GM12878 (cell line): ENCODE measurements at regions of chr1 and their contacts with region 1.

Region 1: GRCh38 chr1:45583264-45583665 is 576 bp upstream of the NASP start:
- DNase-seq: peak; percentile 98
- ATAC-seq: peak; percentile 89
- H3K4me3 ChIP-seq: peak overlapping the region; percentile 94
- H3K27ac ChIP-seq: peak overlapping the region; percentile 97
- H3K4me1 ChIP-seq: peaks cover 12% of the 10 kb centered on the region; the same call in 1 of the 2 replicates
- H3K27me3 ChIP-seq: no peaks in the 10 kb centered on the region
- CTCF ChIP-seq: no peak
- EP300 ChIP-seq: no peak
- POLR2A ChIP-seq: no peak
- RAD21 ChIP-seq: no peak

Region 2: DNA sequence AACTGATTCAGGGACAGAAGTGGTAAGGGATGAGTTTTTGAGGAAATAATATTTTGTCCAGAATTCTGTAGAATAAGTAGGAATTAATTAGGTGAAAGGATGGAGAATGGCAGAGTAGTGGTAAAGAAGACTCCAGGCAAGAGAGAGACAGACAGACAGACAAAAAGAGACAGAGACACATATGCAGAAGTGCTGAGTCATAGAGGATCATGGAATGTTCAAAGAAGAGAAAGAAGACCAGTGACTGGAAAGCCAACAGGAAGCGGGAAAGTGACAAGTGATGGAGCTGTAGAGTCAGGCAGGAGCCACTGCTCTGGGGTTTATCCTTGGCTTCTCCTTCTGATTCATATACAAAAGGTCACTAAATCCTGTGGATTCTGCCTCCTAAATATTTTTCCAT is 485.3 kb before region 1 on chr1:
- CTCF ChIA-PET with region 1: no interaction called
- POLR2A ChIA-PET with region 1: no interaction called
- RAD21 ChIA-PET with region 1: no interaction called
- SMC1A ChIA-PET with region 1: no interaction called
- in situ Hi-C with region 1: no loop called
- intact Hi-C with region 1: no loop called
- DNase-seq: no peak
- ATAC-seq: no peak
- H3K4me3 ChIP-seq: no peak overlapping the region
- H3K27ac ChIP-seq: no peak overlapping the region
- H3K4me1 ChIP-seq: no peaks in the 10 kb centered on the region
- H3K27me3 ChIP-seq: no peaks in the 10 kb centered on the region
- CTCF ChIP-seq: no peak
- EP300 ChIP-seq: no peak
- POLR2A ChIP-seq: no peak
- RAD21 ChIP-seq: no peak

Region 3: GRCh38 chr1:45543581-45544417 is 39.5 kb before region 1 on chr1:
- CTCF ChIA-PET with region 1: interaction called, 3 read pairs
- POLR2A ChIA-PET with region 1: interaction called, 20 read pairs
- RAD21 ChIA-PET with region 1: interaction called, 8 read pairs
- SMC1A ChIA-PET with region 1: interaction called, 17 read pairs
- in situ Hi-C with region 1: no loop called
- intact Hi-C with region 1: no loop called
- DNase-seq: peak; percentile 76
- ATAC-seq: peak; percentile 79
- H3K4me3 ChIP-seq: peak overlapping the region; percentile 25; the same call in 1 of the 2 replicates
- H3K27ac ChIP-seq: peak overlapping the region; percentile 78
- H3K4me1 ChIP-seq: peaks cover 30% of the 10 kb centered on the region
- H3K27me3 ChIP-seq: no peaks in the 10 kb centered on the region
- CTCF ChIP-seq: no peak
- EP300 ChIP-seq: peak; percentile 84 to 93
- POLR2A ChIP-seq: 0 out of 2 replicates have a peak, but pooled peaks have one; percentile 29
- RAD21 ChIP-seq: no peak

Region 4: DNA sequence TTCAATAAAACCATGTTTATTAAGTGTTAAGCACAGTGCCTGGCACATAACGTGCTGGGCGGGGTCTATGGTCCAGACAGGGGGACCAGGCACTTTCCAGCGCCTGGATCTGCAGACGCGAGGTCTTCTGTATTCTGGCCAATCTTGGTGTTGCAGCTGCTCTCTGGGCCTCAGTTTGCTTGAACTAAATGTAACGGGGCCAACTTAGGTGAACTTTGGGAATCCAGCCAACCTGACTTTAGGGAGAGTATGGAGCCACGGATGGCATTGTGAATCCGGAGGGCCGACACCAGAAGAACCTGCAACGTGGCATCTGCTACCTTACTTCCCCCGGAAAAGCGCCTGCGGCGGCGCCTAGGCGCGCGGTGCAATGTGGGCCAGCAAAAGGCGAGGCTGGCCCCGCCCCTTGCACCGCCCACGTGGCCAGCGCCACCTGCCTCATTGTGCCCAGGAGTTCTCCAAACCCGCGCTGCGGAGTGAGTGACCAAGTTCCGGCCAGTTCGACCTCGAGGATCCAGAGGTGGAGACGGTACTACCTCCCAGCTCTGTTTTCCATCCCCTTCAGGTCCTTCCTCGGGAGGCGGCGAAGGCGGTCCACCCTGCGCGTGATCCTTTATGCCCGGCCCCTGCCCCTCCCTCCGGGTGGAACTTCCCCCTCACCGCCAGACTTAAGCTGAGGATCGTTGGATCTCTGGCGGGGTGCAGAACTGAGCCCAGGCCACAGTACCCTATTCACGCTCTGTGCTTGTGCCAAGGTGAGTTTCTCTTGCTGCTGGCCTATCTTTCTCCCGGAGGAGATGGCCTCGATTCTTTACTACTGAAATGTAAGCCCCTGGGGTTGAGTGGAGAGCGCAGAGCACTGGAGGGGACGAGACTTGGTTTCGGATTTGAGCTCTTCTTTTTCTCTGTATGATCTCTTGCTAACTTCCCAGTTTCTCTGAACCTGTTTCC is 32.6 kb before region 1 on chr1 and contains the start of gene AKR1A1:
- CTCF ChIA-PET with region 1: interaction called, 4 read pairs
- POLR2A ChIA-PET with region 1: interaction called, 20 read pairs
- RAD21 ChIA-PET with region 1: interaction called, 9 read pairs
- SMC1A ChIA-PET with region 1: interaction called, 17 read pairs
- in situ Hi-C with region 1: no loop called
- intact Hi-C with region 1: no loop called
- DNase-seq: peak; percentile 74
- ATAC-seq: peak; percentile 94
- H3K4me3 ChIP-seq: peak within 1 kb of the TSS; percentile 87
- H3K27ac ChIP-seq: peak within 1 kb of the TSS; percentile 91
- H3K4me1 ChIP-seq: peaks cover 16% of the 10 kb centered on the region
- H3K27me3 ChIP-seq: no peaks in the 10 kb centered on the region
- CTCF ChIP-seq: no peak
- EP300 ChIP-seq: no peak
- POLR2A ChIP-seq: peak; percentile 92
- RAD21 ChIP-seq: no peak
- polyA plus RNA-seq, gene AKR1A1: 199 to 200 TPM